Naive thymus-derived CD4-positive, alpha-beta T cell (primary cell): ENCODE measurements at regions of chr17 and their contacts with region 1.

Region 1: DNA sequence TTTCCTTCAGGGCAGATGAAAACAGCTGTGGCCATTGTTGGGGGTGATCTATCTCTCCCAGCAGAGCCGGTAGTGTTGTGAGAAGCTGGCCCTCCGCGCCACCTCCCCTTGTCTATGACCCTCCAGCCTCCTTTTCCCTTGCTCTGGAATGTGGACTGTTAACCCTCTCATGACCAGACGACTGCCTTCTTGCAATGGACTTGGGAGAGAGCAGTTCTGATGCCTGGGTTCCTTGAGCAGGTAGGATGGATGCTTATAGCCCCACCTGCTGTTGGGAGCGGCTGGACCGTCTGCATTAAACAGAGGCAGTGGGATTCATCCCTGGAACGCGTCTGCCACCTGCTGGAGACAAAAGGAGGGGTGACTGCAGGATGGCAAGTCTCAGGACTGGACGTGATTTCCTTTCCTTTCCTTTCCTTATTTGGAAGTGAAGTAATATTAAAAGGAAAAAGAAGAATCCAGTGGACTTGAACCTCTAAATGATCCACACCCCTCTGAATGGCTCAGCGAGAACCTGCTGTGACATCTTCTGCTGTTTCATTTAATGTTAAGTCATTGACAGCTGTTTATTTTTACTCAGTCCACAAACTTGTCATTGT is 1.8 kb upstream of the SOST start:
- DNase-seq: peak; percentile 69 to 86 (median 82)
- ATAC-seq: peak; percentile 99
- H3K4me3 ChIP-seq: no peak overlapping the region
- H3K4me3 Mint-ChIP-seq: no peak overlapping the region
- H3K27ac ChIP-seq: no peak overlapping the region
- H3K27ac Mint-ChIP-seq: no peak overlapping the region
- H3K4me1 ChIP-seq: no peaks in the 10 kb centered on the region
- H3K4me1 Mint-ChIP-seq: peaks cover 0 to 6% (median 0%) of the 10 kb centered on the region in 7 donors
- H3K27me3 ChIP-seq: no peaks in the 10 kb centered on the region
- H3K27me3 Mint-ChIP-seq: peaks cover 13 to 31% (median 25%) of the 10 kb centered on the region in 5 donors

Region 2: GRCh38 chr17:43576563-43577229 is 183.7 kb before region 1 on chr17:
- CTCF ChIA-PET with region 1: interaction called, 25 read pairs
- POLR2A ChIA-PET with region 1: no interaction called
- intact Hi-C with region 1: loop called (anchors 1 to 5 kb)
- DNase-seq: peak; percentile 33 to 65 (median 52)
- ATAC-seq: peak; percentile 79
- H3K4me3 ChIP-seq: no peak overlapping the region
- H3K4me3 Mint-ChIP-seq: no peak overlapping the region
- H3K27ac ChIP-seq: no peak overlapping the region
- H3K27ac Mint-ChIP-seq: peak overlapping the region in 2 of 9 donors; percentile 23 to 74
- H3K4me1 ChIP-seq: peaks cover 5 to 6% of the 10 kb centered on the region in 2 donors
- H3K4me1 Mint-ChIP-seq: peaks cover 8 to 22% (median 14%) of the 10 kb centered on the region in 7 donors
- H3K27me3 ChIP-seq: no peaks in the 10 kb centered on the region
- H3K27me3 Mint-ChIP-seq: peaks cover 0 to 7% (median 0%) of the 10 kb centered on the region in 5 donors

Region 3: GRCh38 chr17:43694077-43694870 is 66.1 kb before region 1 on chr17:
- CTCF ChIA-PET with region 1: interaction called, 160 read pairs
- POLR2A ChIA-PET with region 1: interaction called, 3 read pairs
- intact Hi-C with region 1: loop called (anchors 1 kb)
- DNase-seq: peak; percentile 43 to 75 (median 67)
- ATAC-seq: peak; percentile 97
- H3K4me3 ChIP-seq: no peak overlapping the region
- H3K4me3 Mint-ChIP-seq: no peak overlapping the region
- H3K27ac ChIP-seq: no peak overlapping the region
- H3K27ac Mint-ChIP-seq: no peak overlapping the region
- H3K4me1 ChIP-seq: no peaks in the 10 kb centered on the region
- H3K4me1 Mint-ChIP-seq: no peaks in the 10 kb centered on the region
- H3K27me3 ChIP-seq: no peaks in the 10 kb centered on the region
- H3K27me3 Mint-ChIP-seq: peaks cover 5 to 15% (median 6%) of the 10 kb centered on the region in 5 donors

Region 4: GRCh38 chr17:43701318-43701743 is 59.0 kb before region 1 on chr17:
- CTCF ChIA-PET with region 1: interaction called, 160 read pairs
- POLR2A ChIA-PET with region 1: interaction called, 4 read pairs
- intact Hi-C with region 1: no loop called
- DNase-seq: peak in 1 of 9 donors; percentile 49
- ATAC-seq: peak; percentile 73
- H3K4me3 ChIP-seq: no peak overlapping the region
- H3K4me3 Mint-ChIP-seq: peak overlapping the region in 1 of 10 donors; percentile 49
- H3K27ac ChIP-seq: no peak overlapping the region
- H3K27ac Mint-ChIP-seq: no peak overlapping the region
- H3K4me1 ChIP-seq: peaks cover 0 to 4% of the 10 kb centered on the region in 2 donors
- H3K4me1 Mint-ChIP-seq: peaks cover 0 to 14% (median 4%) of the 10 kb centered on the region in 7 donors
- H3K27me3 ChIP-seq: no peaks in the 10 kb centered on the region
- H3K27me3 Mint-ChIP-seq: peaks cover 17 to 32% (median 21%) of the 10 kb centered on the region in 5 donors

Region 5: GRCh38 chr17:43750154-43750553 is 10.2 kb before region 1 on chr17:
- CTCF ChIA-PET with region 1: interaction called, 12 read pairs
- POLR2A ChIA-PET with region 1: no interaction called
- intact Hi-C with region 1: no loop called
- DNase-seq: no peak
- ATAC-seq: no peak
- H3K4me3 ChIP-seq: no peak overlapping the region
- H3K4me3 Mint-ChIP-seq: no peak overlapping the region
- H3K27ac ChIP-seq: no peak overlapping the region
- H3K27ac Mint-ChIP-seq: no peak overlapping the region
- H3K4me1 ChIP-seq: no peaks in the 10 kb centered on the region
- H3K4me1 Mint-ChIP-seq: peaks cover 0 to 16% (median 0%) of the 10 kb centered on the region in 7 donors
- H3K27me3 ChIP-seq: peaks cover 0 to 2% of the 10 kb centered on the region in 2 donors
- H3K27me3 Mint-ChIP-seq: peaks cover 30 to 51% (median 50%) of the 10 kb centered on the region in 5 donors